Sigmoid colon (tissue), 7 donors: ENCODE measurements at regions of chr6 and their contacts with region 1.

Region 1: GRCh38 chr6:32933636-32934085 is 7.2 kb downstream of the HLA-DMB start:
- DNase-seq: peak; percentile 87
- H3K4me3 ChIP-seq: no peak overlapping the region
- H3K27ac ChIP-seq: no peak overlapping the region
- H3K4me1 ChIP-seq: peaks cover 0 to 6% (median 0%) of the 10 kb centered on the region in 4 donors
- H3K27me3 ChIP-seq: no peaks in the 10 kb centered on the region
- CTCF ChIP-seq: peak; percentile 40 to 75 (median 69)
- EP300 ChIP-seq: no peak
- POLR2A ChIP-seq: no peak

Region 2: GRCh38 chr6:32885698-32886286 is 47.9 kb before region 1 on chr6:
- intact Hi-C with region 1: loop called (anchors 1 kb)
- DNase-seq: no peak
- H3K4me3 ChIP-seq: no peak overlapping the region
- H3K27ac ChIP-seq: peak overlapping the region in 3 of 4 donors; percentile 49 to 74 (median 67)
- H3K4me1 ChIP-seq: peaks cover 0 to 22% (median 20%) of the 10 kb centered on the region in 4 donors
- H3K27me3 ChIP-seq: no peaks in the 10 kb centered on the region
- CTCF ChIP-seq: peak; percentile 25 to 66 (median 56)
- EP300 ChIP-seq: no peak
- POLR2A ChIP-seq: no peak

Region 3: GRCh38 chr6:32971581-32972352 is 38.1 kb after region 1 on chr6:
- intact Hi-C with region 1: loop called (anchors 5 kb)
- DNase-seq: peak; percentile 100
- H3K4me3 ChIP-seq: peak overlapping the region; percentile 71 to 87 (median 83)
- H3K27ac ChIP-seq: peak overlapping the region; percentile 98 to 99 (median 98)
- H3K4me1 ChIP-seq: peaks cover 0 to 41% (median 35%) of the 10 kb centered on the region in 4 donors
- H3K27me3 ChIP-seq: no peaks in the 10 kb centered on the region
- CTCF ChIP-seq: no peak
- EP300 ChIP-seq: peak in 2 of 4 donors; percentile 48 to 82
- POLR2A ChIP-seq: peak; percentile 99

Region 4: DNA sequence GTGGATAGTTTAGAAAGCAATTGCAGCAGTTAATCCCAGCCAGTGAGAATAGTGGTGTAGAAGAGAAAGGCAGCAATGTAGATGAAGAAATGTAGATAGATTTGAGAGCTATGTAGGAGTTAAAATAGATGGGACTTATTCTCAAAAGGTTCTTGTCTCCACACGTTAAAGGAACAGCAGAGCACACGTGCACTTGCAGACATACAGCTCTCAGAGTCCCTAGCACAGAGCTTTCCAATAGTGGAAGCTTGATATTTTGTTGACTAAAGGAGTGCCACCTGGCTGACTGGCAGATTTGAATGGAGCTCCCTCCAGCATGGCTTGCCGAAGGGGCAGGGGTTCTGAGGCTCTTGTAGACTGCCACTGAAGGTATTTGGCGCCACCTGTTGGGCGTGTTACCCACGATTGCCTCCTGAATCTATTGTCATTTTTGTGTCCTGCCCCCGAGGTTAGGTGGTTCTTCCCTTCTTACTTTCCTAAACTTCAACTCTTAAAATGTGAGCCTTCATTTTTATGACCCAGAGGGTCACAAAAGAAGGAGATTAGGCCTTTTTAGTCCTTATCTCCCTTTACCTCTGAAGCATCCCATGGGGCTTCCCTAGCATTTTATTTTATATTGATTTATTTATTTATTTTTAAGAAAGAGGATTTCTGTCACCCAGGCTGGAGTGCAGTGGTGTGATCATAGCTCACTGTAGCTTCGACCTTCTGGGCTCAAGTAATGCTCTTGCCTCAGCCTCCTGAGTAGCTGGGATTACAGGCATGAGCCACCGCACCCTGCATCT is 51.1 kb after region 1 on chr6:
- intact Hi-C with region 1: loop called (anchors 1 kb)
- DNase-seq: peak; percentile 93
- H3K4me3 ChIP-seq: no peak overlapping the region
- H3K27ac ChIP-seq: peak overlapping the region in 2 of 4 donors; percentile 30 to 75
- H3K4me1 ChIP-seq: peaks cover 0 to 41% (median 18%) of the 10 kb centered on the region in 4 donors
- H3K27me3 ChIP-seq: no peaks in the 10 kb centered on the region
- CTCF ChIP-seq: peak; percentile 79 to 90 (median 86)
- EP300 ChIP-seq: no peak
- POLR2A ChIP-seq: no peak